ENCODE measurements at regions of chr3 and their contacts with region 1.

Region 1: DNA sequence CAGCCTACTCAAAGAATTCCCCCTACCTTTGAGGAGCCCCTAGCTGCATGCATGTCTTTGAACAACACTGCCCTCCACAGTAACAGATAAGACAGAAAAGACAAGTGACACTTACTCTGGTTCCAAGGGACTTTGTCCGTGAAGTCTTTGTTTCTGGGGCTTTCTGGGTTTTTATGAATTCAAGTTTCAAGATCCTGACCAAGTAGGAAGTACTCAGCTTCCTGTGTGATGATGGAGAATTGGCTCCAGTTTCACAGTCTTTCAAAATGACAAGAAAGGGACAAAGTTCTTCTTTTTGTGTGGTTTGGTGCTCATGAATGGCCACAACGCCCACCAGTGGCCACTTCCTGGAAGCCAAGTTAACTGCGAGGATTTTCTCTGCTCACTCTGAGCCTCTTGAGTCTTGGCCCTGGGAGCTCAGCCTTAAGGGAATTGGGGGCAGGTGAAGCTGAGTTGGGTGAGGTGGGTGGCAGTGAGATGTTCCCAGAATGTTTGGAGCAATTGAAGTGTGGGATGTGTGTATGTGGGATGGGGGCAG is at the start of gene CCR1:
- DNase-seq: peak; percentile 53 to 91 (median 90)
- H3K4me3 ChIP-seq: peak within 1 kb of the TSS in 4 of 7 experiments; percentile 11 to 49 (median 30)
- H3K27ac ChIP-seq: no peak within 1 kb of the TSS
- H3K4me1 ChIP-seq: peaks cover 14 to 34% (median 26%) of the 10 kb centered on the region in 4 experiments
- H3K27me3 ChIP-seq: no peaks in the 10 kb centered on the region

Region 2: DNA sequence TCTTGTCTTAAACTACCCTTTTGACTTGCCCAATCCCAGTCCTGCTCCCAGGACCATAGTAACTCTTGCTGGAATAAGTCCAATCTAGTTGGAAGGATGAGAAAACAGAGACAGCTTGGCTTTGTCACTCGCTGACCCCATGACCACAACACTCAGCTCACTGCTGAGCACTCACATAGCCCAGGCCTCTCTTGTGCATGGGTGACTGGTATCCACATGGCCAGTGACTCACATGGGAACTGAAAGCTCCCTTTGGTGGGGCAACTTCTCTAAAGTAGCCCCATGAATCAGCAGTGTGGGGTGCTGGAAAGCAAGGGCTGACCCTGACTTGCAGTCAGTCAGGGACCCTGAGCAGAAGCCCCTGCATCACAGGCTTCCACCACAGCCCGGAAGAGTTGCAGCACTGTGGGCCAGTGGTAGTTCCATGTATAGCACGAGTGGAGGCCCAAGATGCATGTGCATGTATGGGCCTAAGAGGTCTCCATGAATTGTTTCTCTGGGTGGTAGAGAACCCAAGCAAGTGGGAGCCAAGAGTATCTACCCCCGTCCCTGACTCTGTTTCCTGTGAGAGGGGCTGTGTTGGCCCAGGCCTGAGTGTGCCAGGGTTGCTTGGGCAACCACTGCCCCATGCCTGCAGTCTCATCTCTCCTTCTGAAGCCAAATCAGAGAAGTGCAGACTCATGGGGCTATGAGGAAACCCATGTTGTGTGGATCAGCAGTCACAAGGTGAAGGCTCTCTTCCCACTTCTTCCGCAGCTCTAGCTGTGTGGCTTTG is 118.8 kb before region 1 on chr3:
- CTCF ChIA-PET with region 1: interaction called, 47 read pairs
- POLR2A ChIA-PET with region 1: no interaction called
- DNase-seq: peak in 2 of 3 donors; percentile 73 to 79
- H3K4me3 ChIP-seq: no peak overlapping the region
- H3K27ac ChIP-seq: no peak overlapping the region
- H3K4me1 ChIP-seq: peaks cover 12 to 56% (median 26%) of the 10 kb centered on the region in 4 experiments
- H3K27me3 ChIP-seq: no peaks in the 10 kb centered on the region

Region 3: DNA sequence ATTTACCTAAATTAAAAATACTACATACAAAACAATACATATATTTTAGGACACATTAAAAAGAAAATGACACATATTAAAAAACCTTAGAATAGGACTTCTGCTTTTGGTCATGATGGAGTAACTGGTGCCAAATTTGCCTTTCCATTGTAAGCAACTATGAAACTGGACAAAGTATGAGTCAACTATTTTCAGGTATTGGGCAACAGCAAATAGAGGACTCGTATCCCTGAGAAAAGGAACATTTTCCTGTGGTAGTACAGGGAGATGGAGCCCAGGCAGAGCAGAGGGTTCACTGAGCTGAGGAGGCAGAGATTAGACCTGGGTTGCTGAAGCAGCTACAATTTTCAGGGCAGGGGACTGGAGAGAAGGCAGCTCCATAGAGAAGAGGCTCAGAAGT is 14.8 kb before region 1 on chr3:
- CTCF ChIA-PET with region 1: interaction called, 19 read pairs
- POLR2A ChIA-PET with region 1: no interaction called
- DNase-seq: peak in 2 of 3 donors; percentile 32 to 45
- H3K4me3 ChIP-seq: no peak overlapping the region
- H3K27ac ChIP-seq: no peak overlapping the region
- H3K4me1 ChIP-seq: peaks cover 0 to 5% (median 0%) of the 10 kb centered on the region in 4 experiments
- H3K27me3 ChIP-seq: no peaks in the 10 kb centered on the region